ACHN (cell line): ENCODE measurements at regions of chr9 and their contacts with region 1.

Region 1: DNA sequence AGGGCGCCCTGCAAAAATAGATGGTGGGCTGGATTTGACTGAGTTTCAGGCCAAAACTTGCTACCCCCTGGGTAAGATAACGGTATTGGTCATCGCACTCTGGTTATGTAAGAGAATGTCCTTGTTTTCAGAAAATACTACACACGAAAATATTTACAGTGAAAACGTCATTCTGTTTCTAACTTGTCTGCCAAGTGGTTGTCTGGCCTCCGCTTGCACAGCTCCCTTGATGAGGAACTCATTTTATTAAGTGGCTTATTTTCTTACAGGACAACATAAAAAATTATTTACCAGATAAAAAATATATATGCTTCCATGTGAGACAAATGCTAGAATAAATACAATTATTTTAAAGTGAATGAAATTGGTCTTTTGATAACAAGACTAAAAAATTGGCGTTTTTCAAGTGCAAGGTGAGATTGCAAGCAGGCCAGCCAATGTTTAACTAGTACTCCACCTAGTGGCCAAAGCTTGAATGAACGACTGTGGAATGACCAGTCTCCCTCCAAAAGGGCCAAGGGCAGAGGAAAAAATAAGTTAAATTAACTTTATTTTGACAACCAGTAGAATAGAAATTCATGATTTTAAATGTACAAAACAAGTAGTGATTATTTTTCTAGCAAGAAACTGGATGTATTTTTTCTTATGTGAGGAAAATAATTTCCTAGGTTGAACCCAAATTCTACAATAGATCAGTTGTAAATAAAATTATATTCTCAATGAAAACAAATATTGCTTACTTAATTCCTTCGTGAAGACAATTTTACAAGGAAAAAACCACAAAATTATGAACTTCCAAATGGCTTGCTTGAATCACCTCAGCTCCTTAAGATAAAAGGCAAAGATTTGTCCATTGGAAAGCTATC is 93.2 kb downstream of the ZFAND5 start:
- DNase-seq: peak; percentile 59

Region 2: DNA sequence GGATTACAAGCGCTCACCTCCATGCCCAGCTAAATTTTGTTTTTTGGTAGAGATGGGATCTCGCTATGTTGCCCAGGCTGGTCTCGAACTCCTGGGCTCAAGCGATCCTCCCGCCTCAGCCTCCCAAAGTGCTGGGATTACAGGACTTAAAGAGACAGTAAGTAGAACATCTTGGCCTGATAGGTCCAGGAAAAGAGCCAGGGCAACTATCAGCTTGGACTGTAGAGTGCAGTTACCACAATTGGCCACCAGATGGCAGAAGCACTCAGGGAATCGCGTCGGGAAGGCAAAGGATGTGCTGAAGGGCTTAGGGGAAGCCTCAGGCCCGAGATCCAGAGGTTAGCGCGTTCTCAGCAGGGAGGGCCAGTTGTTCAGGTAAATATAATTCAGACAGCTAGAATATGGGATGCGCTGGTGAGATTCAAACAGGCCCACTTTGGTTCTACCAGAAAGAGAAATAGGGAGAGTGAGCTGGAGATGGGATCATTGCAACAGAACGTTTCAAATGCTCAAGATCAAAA is 232.9 kb before region 1 on chr9:
- in situ Hi-C with region 1: loop called (anchors 25 kb)
- DNase-seq: peak; percentile 68

Region 3: GRCh38 chr9:72169178-72169577 is 102.7 kb before region 1 on chr9:
- in situ Hi-C with region 1: no loop called
- DNase-seq: no peak